ENCODE measurements at regions of chr5 and their contacts with region 1.

Region 1: DNA sequence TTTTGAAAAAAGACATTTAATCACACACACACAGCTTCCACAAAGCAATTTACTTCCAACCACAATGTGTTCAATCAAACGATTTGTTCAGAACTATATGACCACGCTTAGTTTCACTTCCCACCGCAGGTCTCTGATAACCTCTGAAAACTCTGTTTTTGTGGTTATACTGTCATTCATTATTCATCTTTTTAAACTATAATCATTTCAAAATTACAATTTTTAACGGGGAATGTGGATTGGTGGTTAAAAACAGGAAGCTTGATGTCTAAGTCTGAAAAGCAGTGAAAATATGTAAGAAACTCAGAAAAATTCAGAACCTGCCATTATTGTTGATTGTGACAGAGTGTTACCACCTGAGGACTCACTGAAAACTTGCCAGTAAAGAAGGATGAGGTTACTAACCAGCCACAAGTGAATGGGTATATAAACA is 12.7 kb upstream of the TMEM174 start:
- DNase-seq: peak; percentile 79
- H3K4me3 Mint-ChIP-seq: peak overlapping the region; percentile 12
- H3K27ac Mint-ChIP-seq: peak overlapping the region; percentile 4
- H3K4me1 Mint-ChIP-seq: peaks cover 28% of the 10 kb centered on the region
- H3K27me3 Mint-ChIP-seq: peaks cover 67% of the 10 kb centered on the region

Region 2: GRCh38 chr5:72955768-72956323 is 204.4 kb before region 1 on chr5 and contains the start of gene FCHO2:
- CTCF ChIA-PET with region 1: no interaction called
- POLR2A ChIA-PET with region 1: no interaction called
- intact Hi-C with region 1: loop called (anchors 1 kb)
- DNase-seq: peak; percentile 95
- H3K4me3 Mint-ChIP-seq: peak within 1 kb of the TSS; percentile 87
- H3K27ac Mint-ChIP-seq: peak within 1 kb of the TSS; percentile 49
- H3K4me1 Mint-ChIP-seq: peaks cover 14% of the 10 kb centered on the region
- H3K27me3 Mint-ChIP-seq: peaks cover 43% of the 10 kb centered on the region
- total RNA-seq, gene FCHO2: 1.3 TPM

Region 3: DNA sequence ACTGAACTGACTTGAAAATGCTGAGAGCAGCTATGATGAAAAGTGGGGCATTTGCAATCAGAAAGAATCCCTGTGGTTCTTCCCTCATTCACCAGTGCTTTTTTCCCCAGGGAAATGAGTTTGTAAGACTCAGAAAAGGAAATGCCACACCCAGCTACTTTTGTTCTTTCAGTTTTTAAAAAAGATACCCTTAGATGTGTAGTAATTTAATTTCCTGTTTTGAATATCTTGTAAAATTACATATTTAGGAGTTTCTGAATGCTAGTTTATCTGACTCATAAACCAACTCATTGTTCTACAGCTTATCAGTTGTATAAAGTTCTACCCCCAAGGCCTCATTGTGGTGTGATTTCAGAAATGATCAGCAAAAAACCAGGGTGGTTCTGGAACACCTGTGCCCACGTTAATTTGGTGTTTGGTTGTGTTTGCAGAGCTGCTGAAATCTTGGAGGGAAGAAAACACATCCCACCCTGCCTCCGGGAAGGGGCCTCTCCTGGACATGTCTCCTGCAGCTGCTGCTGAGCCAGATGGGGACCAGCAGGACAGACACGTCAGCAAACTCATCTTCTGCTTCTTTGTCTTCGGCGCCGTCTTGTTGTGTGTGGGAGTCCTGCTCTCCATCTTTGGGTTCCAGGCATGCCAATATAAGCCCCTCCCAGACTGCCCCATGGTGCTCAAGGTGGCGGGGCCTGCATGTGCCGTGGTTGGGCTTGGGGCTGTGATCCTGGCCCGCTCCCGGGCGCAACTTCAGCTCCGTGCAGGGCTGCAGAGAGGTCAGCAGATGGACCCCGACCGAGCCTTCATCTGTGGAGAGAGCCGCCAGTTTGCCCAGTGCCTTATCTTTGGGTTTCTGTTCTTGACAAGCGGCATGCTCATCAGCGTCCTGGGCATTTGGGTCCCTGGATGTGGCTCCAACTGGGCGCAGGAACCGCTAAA is 37.1 kb before region 1 on chr5:
- CTCF ChIA-PET with region 1: interaction called, 3 read pairs
- POLR2A ChIA-PET with region 1: interaction called, 9 read pairs
- intact Hi-C with region 1: loop called (anchors 1 kb)
- DNase-seq: no peak
- H3K4me3 Mint-ChIP-seq: no peak overlapping the region
- H3K27ac Mint-ChIP-seq: no peak overlapping the region
- H3K4me1 Mint-ChIP-seq: peaks cover 30% of the 10 kb centered on the region
- H3K27me3 Mint-ChIP-seq: peaks cover 66% of the 10 kb centered on the region

Region 4: DNA sequence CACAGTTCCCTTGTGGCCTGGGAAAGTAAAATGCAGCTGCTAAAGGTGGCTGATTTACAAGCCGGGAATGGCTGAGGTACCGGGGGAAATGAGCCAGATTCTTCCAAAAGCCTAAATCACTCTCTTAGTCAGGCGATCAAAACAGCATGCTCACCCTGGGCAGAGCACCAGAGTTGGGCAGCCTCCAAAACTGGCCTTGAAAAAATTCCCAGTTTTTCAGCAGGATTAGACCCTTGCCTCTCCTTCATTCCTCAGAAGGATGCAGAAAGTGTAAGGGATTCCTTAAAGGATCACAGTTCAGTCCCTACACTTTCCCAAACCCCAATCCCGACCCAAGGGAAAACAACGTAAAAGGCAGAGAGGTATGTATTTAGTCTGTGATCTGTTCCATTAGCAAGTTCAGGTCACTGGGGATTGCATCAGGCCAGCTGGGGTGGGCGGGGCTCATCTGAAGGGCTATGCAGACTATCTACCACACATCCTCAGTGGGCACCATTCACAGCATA is 29.7 kb after region 1 on chr5:
- CTCF ChIA-PET with region 1: no interaction called
- POLR2A ChIA-PET with region 1: no interaction called
- intact Hi-C with region 1: no loop called
- DNase-seq: no peak
- H3K4me3 Mint-ChIP-seq: no peak overlapping the region
- H3K27ac Mint-ChIP-seq: no peak overlapping the region
- H3K4me1 Mint-ChIP-seq: no peaks in the 10 kb centered on the region
- H3K27me3 Mint-ChIP-seq: peaks cover 43% of the 10 kb centered on the region

Measured in activated CD4-positive, alpha-beta memory T cell treated with anti-CD3 and anti-CD28 coated beads for 36 hours (primary cell).